BJ (cell line): ENCODE measurements at regions of chr18 and their contacts with region 1.

Region 1: DNA sequence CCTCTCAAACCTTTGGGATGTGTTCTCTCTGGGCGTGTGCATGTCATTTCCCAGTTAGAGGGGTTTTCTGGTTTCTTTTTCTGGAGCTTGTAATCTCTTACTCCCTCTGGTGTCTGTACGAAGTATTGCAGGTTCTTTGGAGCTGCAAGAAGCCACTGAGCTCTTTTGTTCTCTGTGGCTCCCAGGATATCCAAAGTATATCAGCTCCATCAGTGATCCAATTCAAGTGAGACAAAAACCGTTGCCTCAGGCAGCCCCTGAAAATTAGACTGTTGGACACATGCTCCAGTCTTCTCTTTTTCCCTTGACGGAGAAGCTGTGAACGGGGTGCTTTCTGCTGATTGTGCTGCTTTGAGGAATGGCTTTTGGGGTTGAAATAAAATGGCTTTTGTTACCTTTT is 59.0 kb upstream of the LDLRAD4 start:
- DNase-seq: no peak
- H3K4me3 ChIP-seq: no peak overlapping the region
- H3K27me3 ChIP-seq: no peaks in the 10 kb centered on the region; the same call in none of the 2 replicates
- CTCF ChIP-seq: peak; percentile 84

Region 2: DNA sequence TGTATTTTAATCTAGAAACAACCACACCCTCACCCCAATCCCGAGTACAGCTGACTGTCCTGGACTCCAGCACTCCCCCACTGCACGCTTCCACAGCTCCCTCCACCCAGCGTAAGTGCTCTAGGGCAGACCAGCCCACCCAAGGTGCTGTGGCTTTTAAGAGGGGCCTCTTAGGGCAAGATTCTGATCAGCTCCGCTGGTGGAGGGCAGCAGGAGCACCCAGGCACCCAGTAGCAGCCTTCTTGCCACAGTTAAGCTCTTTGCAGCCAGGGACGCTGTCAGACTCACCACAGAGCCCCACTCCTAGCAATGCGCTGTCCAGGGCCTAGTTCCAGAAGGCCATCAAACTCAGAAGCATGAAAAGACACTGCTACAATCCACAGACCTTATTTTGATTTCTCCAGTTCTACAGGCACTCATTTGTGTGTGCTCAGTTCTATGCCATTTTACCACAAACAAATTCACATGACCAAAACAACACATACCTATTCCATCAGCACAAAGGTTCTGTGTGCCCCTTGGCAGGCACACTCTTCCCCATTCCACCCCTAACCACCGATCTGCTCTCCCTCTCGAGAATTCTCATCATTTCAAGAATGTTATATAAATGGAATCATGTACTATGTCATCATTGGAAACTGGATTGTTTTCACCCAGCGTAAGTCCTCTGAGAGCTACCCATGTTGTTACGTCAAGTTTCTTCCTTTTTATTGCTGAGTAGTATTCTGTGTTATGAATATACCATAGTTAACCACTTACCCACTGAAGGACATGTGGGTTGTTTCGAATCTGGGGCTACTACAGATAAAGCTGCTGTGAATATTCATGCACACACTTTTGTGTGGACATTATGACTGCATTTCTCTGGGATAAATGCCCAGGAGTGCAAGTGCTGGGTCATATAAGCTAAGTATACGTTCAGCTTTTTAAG is 315.9 kb before region 1 on chr18:
- CTCF ChIA-PET with region 1: no interaction called
- POLR2A ChIA-PET with region 1: interaction called, 10 read pairs
- DNase-seq: no peak
- H3K4me3 ChIP-seq: no peak overlapping the region
- H3K27me3 ChIP-seq: no peaks in the 10 kb centered on the region
- CTCF ChIP-seq: no peak